PC-9 (cell line): ENCODE measurements at regions of chr2 and their contacts with region 1.

Region 1: DNA sequence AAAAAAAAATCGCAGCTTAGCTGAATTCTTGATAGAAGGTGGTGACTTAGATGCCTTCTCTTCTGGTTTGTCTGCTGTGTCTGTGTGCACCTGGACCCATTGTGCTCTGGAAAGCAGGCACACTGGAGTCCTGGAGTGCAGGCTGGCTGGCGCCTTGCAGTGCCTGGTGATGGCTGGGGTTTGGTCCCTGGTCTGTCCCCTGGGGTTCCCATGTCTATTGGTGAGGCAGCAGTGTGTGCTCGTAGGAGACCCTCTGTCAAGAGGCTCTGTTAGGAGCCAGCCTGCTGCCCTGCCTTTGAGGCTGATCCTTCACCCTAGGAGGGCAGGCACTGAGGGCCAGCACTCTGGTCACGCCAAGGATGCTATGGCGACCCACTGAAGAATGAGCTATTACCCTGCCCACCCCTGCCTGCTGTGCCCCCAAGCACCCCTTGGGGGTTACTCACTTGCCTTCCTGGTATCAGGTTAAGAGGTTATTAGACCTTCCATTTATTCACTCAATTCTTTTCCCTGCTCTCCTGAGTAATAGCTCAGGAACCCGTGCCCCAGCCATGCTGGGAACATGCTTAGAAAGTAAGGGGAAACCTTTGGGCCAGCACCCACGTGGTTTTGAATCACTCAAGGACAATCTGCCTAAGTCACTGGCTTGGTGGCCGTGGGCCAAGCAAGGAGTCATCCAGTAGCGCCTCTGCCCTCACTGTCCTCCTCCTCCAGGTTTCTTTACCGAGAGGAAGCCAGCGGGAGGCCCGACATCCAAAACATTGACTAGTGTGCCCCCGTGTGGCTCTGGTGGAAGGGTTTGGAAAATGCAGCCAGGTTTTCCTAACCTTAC is 284.5 kb downstream of the PRKCE start:
- DNase-seq: peak; percentile 94 to 99
- H3K4me3 ChIP-seq: no peak overlapping the region
- H3K27ac ChIP-seq: peak overlapping the region; percentile 55
- H3K4me1 ChIP-seq: peaks cover 44% of the 10 kb centered on the region
- H3K27me3 ChIP-seq: no peaks in the 10 kb centered on the region
- CTCF ChIP-seq: peak; percentile 93

Region 2: DNA sequence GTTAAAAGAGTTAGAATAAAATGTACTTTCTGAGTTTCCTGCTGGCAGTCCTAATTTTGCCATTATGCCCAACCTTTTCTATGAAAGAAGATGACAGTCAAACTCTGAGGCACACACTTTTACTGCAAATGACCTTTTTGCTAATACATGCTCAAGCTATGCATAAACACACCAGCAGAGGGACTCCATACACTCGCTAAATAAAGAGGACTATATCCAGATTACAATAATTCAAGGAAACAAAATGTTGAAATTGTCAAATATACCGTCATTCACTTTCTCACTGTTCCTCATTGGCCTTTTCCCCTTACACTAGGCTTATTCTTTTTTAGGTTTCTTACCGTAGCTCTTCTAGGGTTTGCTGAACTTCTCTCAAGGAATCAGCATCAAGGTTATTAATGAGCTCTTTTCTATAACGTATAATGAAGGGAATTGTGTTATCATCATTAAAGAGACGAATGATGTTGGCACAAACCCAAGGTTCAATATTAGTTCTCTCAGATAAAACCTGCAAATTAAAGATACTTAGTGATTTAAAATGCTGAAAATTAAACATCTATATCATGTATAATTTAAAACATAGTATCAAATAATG is 350.6 kb before region 1 on chr2:
- CTCF ChIA-PET with region 1: interaction called, 3 read pairs
- POLR2A ChIA-PET with region 1: no interaction called
- intact Hi-C with region 1: loop called (anchors 1 kb)
- DNase-seq: no peak
- H3K4me3 ChIP-seq: no peak overlapping the region
- H3K27ac ChIP-seq: no peak overlapping the region
- H3K4me1 ChIP-seq: no peaks in the 10 kb centered on the region
- H3K27me3 ChIP-seq: no peaks in the 10 kb centered on the region
- CTCF ChIP-seq: peak; percentile 82

Region 3: DNA sequence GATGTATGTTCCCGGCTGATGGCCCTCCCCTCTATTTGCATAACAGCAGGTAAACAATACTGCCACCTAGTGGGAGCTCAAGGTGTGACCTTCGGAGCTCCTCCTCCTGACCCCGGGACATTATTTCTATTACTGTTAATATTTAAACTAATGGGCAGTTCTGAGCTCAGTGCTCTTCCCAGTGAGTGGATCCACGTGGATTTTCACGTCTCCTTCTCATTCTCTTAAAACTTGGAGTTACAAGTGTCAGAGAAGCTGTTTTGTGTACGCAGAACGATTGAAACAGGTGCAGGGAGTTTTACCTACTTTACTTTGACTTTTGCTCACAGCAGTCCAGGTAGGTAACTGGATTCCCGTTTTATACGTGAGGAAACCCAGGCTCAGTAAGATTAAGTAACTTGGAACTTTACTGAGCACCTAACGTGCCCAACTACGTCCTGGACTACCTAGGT is 157.3 kb before region 1 on chr2:
- CTCF ChIA-PET with region 1: interaction called, 6 read pairs
- POLR2A ChIA-PET with region 1: interaction called, 8 read pairs
- intact Hi-C with region 1: loop called (anchors 1 kb)
- DNase-seq: peak; percentile 67 to 68
- H3K4me3 ChIP-seq: no peak overlapping the region
- H3K27ac ChIP-seq: no peak overlapping the region
- H3K4me1 ChIP-seq: no peaks in the 10 kb centered on the region
- H3K27me3 ChIP-seq: no peaks in the 10 kb centered on the region
- CTCF ChIP-seq: peak; percentile 97

Region 4: GRCh38 chr2:45909663-45910191 is 26.3 kb before region 1 on chr2:
- CTCF ChIA-PET with region 1: no interaction called
- POLR2A ChIA-PET with region 1: no interaction called
- intact Hi-C with region 1: loop called (anchors 2 kb)
- DNase-seq: peak; percentile 83 to 95
- H3K4me3 ChIP-seq: no peak overlapping the region
- H3K27ac ChIP-seq: no peak overlapping the region
- H3K4me1 ChIP-seq: peaks cover 19% of the 10 kb centered on the region
- H3K27me3 ChIP-seq: no peaks in the 10 kb centered on the region
- CTCF ChIP-seq: no peak

Region 5: DNA sequence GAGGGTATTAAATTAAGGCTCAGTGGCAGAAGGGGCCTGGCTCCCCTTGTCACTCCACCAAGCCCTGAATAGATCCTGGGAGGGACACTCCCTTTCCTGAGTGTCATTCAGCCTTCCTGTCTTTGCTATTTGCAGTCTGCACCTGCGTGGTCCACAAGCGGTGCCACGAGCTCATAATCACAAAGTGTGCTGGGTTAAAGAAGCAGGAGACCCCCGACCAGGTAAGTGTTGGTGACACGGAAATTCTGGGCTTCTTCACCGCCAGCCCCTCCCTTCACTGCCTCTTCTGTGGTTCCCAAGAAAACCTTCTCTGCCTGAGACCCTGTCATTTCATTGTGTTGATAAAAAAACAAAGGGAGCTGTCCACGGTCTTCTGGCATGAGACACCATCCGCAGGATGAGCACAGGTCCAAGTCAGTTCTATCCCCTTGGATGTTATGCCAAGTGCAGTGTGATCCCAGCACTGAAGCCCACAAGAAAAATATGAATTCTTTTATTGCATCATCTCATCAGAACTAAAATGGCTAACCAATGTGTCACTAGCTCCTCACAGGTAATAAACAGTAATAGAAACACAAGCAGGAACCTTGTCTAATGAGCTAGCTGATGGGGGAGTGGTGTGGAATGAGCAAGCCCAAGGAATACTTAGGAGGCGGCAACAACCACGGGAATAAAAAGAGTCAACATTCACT is 44.3 kb after region 1 on chr2:
- CTCF ChIA-PET with region 1: no interaction called
- POLR2A ChIA-PET with region 1: no interaction called
- intact Hi-C with region 1: no loop called
- DNase-seq: no peak
- H3K4me3 ChIP-seq: no peak overlapping the region
- H3K27ac ChIP-seq: no peak overlapping the region
- H3K4me1 ChIP-seq: no peaks in the 10 kb centered on the region
- H3K27me3 ChIP-seq: no peaks in the 10 kb centered on the region
- CTCF ChIP-seq: no peak

Region 6: DNA sequence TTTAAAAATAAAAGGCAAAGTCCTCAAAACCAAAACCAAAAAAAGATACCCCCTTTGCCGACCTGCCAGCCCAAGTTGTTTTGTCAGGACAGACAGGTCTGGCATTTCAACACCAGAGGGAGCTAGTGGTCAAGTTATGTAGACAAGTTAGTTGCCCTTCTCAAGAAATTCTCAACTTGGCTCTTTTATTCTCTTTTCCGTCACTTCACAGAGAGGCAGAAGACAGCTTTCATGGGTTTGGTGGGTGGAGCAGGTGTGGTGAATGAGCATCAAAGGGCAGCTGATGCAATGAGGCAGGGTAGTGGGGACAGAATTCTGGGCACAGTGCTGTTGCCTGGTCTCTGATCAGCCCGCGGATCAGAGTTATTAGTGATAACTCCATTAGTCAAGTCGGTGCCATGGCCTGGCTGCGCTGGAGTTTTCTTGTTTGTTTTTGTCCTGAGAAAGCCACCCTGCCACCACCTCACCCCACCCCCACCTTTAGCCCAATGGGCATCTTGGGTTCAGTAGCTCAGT is 57.5 kb after region 1 on chr2:
- CTCF ChIA-PET with region 1: no interaction called
- POLR2A ChIA-PET with region 1: no interaction called
- intact Hi-C with region 1: loop called (anchors 1 kb)
- DNase-seq: peak; percentile 59 to 74
- H3K4me3 ChIP-seq: no peak overlapping the region
- H3K27ac ChIP-seq: peak overlapping the region; percentile 88
- H3K4me1 ChIP-seq: peaks cover 36% of the 10 kb centered on the region
- H3K27me3 ChIP-seq: no peaks in the 10 kb centered on the region
- CTCF ChIP-seq: peak; percentile 95

Region 7: GRCh38 chr2:46461011-46461674 is 525.1 kb after region 1 on chr2:
- CTCF ChIA-PET with region 1: no interaction called
- POLR2A ChIA-PET with region 1: no interaction called
- intact Hi-C with region 1: loop called (anchors 2 kb)
- DNase-seq: peak; percentile 65 to 86
- H3K4me3 ChIP-seq: no peak overlapping the region
- H3K27ac ChIP-seq: no peak overlapping the region
- H3K4me1 ChIP-seq: peaks cover 7% of the 10 kb centered on the region
- H3K27me3 ChIP-seq: no peaks in the 10 kb centered on the region
- CTCF ChIP-seq: peak; percentile 100